AG04449 (cell line): ENCODE measurements at regions of chr15 and their contacts with region 1.

Region 1: DNA sequence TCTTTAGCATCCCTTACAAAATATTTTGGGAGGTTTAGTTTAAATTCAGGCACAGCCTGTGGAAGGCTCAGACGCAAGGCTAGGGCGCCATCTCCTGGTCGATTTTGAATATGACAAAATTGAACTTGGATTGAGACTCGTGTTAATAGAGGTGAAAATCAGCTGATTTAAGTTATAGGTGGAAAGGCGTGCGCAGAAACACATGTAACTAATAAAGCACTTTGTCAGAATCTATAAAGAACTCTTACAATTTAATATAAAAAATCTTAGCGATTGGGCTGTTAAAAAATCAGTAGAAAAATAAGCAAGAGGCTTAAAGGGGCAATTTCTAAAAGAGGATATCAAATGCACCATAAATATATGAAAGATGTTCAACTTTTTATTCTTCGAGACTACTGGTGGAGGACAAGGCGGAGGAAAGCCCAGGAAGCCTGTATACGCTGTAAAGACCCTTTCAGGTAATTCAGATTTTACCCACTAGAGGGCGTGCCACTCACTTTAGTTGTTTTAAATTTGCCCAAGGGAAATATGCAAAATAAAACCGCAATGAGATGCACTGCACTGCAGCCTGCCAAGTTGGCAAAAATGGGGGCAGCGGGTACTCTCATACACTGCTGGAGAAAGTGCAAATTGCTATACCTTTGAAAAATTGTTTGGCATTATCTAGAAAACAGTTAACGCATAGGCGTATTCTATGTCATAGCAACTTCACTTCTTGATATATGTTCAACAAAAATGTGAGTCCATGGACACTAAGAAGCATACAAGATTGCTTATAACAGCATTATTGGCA is 64.7 kb downstream of the SLC30A4 start:
- DNase-seq: no peak
- H3K4me3 ChIP-seq: peak overlapping the region; percentile 55
- CTCF ChIP-seq: peak; percentile 60

Region 2: GRCh38 chr15:45166834-45167630 is 290.8 kb before region 1 on chr15:
- CTCF ChIA-PET with region 1: interaction called, 34 read pairs
- POLR2A ChIA-PET with region 1: no interaction called
- DNase-seq: peak; percentile 34
- H3K4me3 ChIP-seq: peak overlapping the region; percentile 60
- CTCF ChIP-seq: peak; percentile 77

Region 3: GRCh38 chr15:45414215-45414885 is 43.5 kb before region 1 on chr15:
- CTCF ChIA-PET with region 1: interaction called, 43 read pairs
- POLR2A ChIA-PET with region 1: no interaction called
- DNase-seq: no peak
- H3K4me3 ChIP-seq: no peak overlapping the region
- CTCF ChIP-seq: no peak

Region 4: DNA sequence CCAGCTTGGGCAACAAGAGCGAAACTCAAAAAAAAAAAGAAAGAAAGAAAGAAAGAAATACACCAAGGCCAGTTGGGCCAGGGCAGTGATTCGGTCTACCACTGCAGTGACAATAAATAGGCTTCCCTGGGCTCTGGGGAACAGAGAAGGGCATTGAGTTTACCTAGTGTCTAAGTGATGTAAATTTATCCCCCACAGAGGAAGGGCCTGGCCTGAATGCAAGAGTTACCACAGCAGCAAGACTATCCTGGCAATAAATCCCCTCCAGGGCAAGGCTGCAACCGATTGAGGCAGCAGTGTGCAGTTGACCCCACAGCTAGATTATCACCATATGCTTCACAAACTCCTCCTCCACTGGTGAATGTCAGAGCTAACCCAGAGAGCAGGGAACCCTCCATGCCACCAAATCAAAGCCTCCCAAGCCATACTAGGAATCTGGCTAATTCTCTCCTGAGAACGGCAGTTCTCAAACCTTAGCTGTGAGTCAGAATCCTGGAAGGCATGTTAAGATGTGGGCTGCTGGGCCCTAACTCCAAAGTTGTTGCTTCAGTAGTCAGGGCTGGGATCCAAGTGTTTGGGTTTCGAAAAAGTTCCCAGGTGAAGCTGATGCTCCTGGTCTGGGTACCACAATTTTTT is 15.2 kb before region 1 on chr15:
- CTCF ChIA-PET with region 1: interaction called, 12 read pairs
- POLR2A ChIA-PET with region 1: no interaction called
- DNase-seq: no peak
- H3K4me3 ChIP-seq: no peak overlapping the region
- CTCF ChIP-seq: peak; percentile 10

Region 5: DNA sequence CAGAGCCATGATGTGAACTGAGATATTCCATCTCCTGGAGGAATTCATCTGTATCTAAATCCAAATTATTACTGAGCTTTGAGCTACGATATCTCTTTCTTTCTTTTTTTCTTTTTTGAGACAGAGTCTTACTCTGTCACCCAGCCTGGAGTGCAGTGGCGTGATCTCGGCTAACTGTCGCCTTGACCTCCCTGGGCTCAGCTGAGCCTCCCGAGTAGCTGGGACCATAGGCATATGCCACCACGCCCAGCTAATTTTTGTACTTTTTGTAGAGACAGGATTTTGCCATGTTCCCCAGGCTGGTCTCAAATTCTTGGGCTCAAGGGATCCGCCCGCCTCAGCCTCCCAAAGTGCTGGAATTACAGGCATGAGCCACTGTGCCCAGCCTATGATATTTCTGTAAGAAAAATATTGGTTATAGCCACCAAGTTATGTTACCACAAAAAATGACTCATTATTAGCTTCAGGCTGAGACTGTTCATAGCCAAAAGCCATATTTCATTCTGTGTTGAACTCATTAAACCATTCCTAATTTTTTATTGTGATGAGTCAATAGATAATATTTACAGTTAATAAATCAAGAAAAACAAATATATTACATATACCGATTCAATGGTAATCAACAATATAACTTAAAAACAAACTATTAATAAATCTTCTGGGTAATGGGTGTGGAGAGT is 91.8 kb after region 1 on chr15:
- CTCF ChIA-PET with region 1: interaction called, 10 read pairs
- POLR2A ChIA-PET with region 1: no interaction called
- DNase-seq: no peak
- H3K4me3 ChIP-seq: no peak overlapping the region
- CTCF ChIP-seq: no peak

Region 6: DNA sequence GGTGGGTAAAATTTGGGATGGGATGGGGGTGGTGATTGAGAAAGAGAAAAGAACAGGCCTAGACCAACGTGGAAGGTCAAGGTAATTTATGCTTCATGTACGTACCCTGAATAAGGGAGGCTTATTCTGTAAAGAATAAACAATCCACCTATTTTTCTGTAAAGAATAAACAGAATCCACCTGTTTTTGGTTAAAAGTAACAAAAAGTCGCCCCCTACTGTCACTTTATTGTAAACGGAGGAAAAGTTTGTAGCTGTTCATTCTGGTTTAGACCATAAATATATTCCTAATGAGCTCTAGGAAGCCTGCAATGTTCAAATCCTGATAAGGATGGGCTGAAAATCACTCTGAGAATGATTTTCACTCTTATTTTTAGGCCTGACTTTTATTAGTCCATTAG is 153.5 kb after region 1 on chr15:
- CTCF ChIA-PET with region 1: interaction called, 282 read pairs
- POLR2A ChIA-PET with region 1: no interaction called
- DNase-seq: no peak
- H3K4me3 ChIP-seq: no peak overlapping the region
- CTCF ChIP-seq: peak; percentile 18